ENCODE measurements at regions of chr11 and their contacts with region 1.

Region 1: DNA sequence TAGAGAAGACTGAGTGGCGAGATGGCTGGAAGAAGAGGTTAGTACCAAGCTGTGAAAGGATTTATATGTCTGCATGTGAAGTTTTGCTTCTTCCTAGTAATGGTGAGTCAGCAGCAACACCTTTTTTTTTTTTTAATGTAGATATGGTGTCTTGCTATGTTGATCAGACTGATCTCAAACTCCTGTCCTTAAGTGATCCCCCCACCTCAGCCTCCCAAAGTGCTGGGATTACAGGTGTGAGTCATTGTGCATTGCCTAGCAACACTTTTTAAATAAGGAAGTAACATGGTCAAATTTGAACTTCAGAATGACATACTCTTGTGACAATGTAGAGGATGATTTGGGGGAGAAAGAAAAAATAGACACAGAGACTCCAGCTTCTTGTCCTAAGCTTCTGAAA is 6.5 kb upstream of the CSTPP1 start:
- DNase-seq: no peak
- ATAC-seq: no peak
- H3K4me3 ChIP-seq: no peak overlapping the region
- H3K27ac ChIP-seq: no peak overlapping the region
- H3K4me1 ChIP-seq: no peaks in the 10 kb centered on the region
- H3K27me3 ChIP-seq: no peaks in the 10 kb centered on the region; the same call in 1 of the 2 replicates
- CTCF ChIP-seq: no peak

Region 2: GRCh38 chr11:46944356-46945075 is 14.4 kb after region 1 on chr11:
- CTCF ChIA-PET with region 1: interaction called, 5 read pairs
- POLR2A ChIA-PET with region 1: interaction called, 13 read pairs
- in situ Hi-C with region 1: no loop called
- intact Hi-C with region 1: no loop called
- DNase-seq: no peak
- ATAC-seq: no peak
- H3K4me3 ChIP-seq: no peak overlapping the region
- H3K27ac ChIP-seq: no peak overlapping the region
- H3K4me1 ChIP-seq: no peaks in the 10 kb centered on the region
- H3K27me3 ChIP-seq: no peaks in the 10 kb centered on the region
- CTCF ChIP-seq: no peak